ENCODE measurements at regions of chr4 and their contacts with region 1.

Region 1: DNA sequence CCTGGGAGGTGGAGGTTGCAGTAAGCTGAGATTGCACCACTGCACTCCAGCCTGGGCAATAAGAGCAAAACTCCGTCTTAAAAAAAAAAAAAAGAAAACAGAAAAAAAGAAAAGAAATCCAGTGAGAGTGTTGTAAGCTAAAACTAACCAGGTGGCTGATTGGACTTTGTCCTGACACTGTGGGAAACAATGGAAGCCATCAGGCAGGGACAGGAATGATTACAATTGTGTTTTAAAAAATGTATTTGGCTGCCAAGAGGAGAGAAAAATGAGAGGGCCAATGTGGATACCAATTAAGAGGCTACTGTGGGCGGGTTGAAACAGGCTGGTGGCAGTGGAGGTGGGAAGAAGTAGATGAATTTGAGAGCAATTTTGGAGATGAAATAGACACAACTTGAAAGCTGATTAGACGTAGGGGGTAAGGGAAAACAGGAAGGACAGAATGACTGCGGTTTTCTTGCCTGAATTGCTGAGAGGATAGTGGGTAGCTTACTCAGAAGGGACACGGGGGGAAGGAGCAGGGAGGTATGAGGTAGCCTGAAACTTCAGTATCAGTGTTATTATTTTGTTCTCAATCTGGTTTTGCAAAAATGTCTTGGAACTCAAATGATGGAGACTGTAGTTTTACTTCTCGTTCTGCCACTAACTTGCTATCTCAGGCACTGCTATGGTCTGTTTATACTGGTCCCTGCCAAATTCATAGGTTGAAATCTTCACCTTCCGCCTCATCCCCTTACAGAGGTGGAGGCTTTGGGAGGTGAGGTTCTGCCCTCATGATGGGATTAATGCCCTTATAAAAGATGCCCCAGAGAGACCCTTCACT is 45.6 kb upstream of the CHRNA9 start:
- DNase-seq: no peak
- ATAC-seq: peak; percentile 70
- H3K4me3 Mint-ChIP-seq: peak overlapping the region; percentile 33
- H3K27ac Mint-ChIP-seq: peak overlapping the region; percentile 85
- H3K4me1 Mint-ChIP-seq: peaks cover 77% of the 10 kb centered on the region
- H3K27me3 Mint-ChIP-seq: no peaks in the 10 kb centered on the region
- CTCF ChIP-seq: no peak

Region 2: DNA sequence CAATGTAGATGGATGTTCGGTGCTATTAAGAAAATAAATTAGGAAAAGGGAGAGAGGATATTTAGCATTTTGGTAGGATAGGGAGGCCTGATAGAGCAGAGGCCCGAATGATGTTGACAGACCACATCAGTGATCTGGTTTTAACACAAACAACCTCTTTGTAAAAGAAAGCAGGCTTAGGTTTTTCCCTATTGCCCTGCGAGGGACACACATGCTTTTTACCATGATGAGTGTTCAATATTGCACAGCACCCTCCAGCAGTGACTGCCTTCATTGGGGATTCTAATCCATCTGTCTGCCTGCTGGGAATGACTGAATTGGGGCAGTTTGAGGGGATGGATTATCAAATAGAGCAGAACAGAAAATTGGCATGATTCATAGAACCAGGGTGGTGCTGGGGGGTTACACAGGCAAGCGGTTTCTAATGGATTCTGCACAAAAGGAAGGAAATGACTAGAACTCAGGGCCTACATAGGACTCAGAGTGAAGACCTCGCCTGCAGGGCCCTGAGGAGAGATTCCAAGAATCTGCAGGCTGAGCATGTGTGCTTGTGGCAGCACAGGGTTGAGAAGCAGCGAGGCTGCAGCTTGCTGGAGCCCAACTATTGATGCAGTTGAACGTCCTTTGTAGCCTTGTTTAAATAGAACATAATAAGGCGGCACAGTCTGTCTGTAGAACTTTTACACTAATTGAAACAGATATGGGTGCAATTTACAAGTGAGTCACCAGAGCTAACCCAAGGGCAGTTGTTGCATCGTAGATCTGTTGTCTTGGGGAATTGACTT is 34.8 kb before region 1 on chr4:
- CTCF ChIA-PET with region 1: no interaction called
- POLR2A ChIA-PET with region 1: no interaction called
- intact Hi-C with region 1: loop called (anchors 5 kb)
- DNase-seq: no peak
- ATAC-seq: no peak
- H3K4me3 Mint-ChIP-seq: no peak overlapping the region
- H3K27ac Mint-ChIP-seq: no peak overlapping the region
- H3K4me1 Mint-ChIP-seq: peaks cover 37% of the 10 kb centered on the region
- H3K27me3 Mint-ChIP-seq: no peaks in the 10 kb centered on the region
- CTCF ChIP-seq: no peak

Region 3: GRCh38 chr4:40275065-40275730 is 14.4 kb before region 1 on chr4:
- CTCF ChIA-PET with region 1: interaction called, 4 read pairs
- POLR2A ChIA-PET with region 1: no interaction called
- intact Hi-C with region 1: loop called (anchors 2 kb)
- DNase-seq: no peak
- ATAC-seq: no peak
- H3K4me3 Mint-ChIP-seq: no peak overlapping the region
- H3K27ac Mint-ChIP-seq: no peak overlapping the region
- H3K4me1 Mint-ChIP-seq: peaks cover 20% of the 10 kb centered on the region
- H3K27me3 Mint-ChIP-seq: no peaks in the 10 kb centered on the region
- CTCF ChIP-seq: no peak